ENCODE measurements at regions of chr10 and their contacts with region 1.

Region 1: DNA sequence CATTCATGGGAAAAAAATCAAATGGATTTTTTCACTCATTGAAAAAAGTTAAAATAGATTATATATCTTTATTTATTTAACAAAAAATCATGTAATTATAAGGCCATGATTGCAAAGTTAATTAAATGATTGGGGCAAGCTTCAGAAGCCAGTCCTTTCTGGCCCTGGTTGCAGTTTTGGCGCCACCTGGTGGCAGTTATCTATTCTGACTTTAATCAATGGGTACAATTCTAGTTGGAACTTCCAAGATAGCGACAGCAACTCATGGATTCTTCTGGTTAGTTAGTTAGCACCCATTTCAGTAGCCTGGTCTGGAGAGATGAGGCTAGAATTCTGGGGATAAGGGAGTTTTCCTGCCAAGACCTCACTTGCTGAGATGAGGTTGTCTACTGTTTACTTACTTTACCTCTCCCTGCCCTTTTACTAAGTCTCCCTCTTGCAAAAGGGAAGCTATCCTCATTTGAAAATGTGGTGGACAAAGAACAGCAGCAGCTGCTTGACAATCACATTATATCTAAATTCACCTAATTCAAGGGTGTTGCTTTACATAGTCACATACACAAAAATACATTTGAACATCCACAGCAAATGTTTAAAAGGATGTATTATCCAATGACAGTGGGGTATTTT is 42.3 kb downstream of the NOC3L start:
- DNase-seq: peak; percentile 68
- H3K4me3 Mint-ChIP-seq: no peak overlapping the region
- H3K27ac Mint-ChIP-seq: no peak overlapping the region
- H3K4me1 Mint-ChIP-seq: peaks cover 4% of the 10 kb centered on the region
- H3K27me3 Mint-ChIP-seq: no peaks in the 10 kb centered on the region

Region 2: DNA sequence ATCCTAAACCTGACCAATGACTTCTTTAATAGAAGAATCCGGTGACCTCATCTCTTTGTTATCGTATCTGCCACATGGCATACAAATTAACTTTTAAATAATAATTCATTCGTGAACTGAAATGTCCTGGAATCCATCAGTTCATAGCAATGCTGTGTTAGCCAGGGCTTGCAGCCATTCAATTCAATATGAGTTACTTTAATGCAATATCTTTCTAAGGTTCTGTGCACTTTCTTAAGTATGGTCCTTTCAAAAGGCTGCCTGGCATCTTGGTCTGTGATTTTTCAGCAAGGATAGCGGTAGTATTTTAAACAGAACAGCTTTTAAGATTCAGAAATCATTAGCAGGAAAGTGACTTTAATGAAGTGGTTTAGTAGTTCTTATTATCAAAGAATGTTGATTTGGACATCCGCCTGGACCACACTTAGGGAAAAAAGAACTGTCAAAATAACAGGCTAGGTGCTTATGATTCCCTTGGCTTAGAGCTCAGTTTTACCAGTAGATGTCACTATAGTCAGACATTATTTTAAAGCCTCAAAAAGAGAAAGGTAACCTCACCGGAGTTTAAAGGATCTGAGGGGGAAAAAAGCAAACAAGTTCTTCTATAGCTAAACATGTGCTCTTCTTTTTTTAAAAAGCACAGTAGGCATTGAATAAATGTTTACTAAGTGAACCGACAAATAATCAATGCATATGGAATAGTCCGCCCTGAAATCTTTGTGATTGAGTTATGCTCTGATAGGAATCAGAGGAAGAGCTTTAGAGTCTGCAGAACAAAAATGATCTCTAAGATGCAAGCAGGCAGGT is 403.9 kb before region 1 on chr10:
- CTCF ChIA-PET with region 1: interaction called, 16 read pairs
- POLR2A ChIA-PET with region 1: no interaction called
- DNase-seq: no peak
- H3K4me3 Mint-ChIP-seq: no peak overlapping the region
- H3K27ac Mint-ChIP-seq: no peak overlapping the region
- H3K4me1 Mint-ChIP-seq: no peaks in the 10 kb centered on the region
- H3K27me3 Mint-ChIP-seq: no peaks in the 10 kb centered on the region

Region 3: GRCh38 chr10:94287336-94287735 is 33.1 kb before region 1 on chr10:
- CTCF ChIA-PET with region 1: interaction called, 29 read pairs
- POLR2A ChIA-PET with region 1: no interaction called
- DNase-seq: no peak
- H3K4me3 Mint-ChIP-seq: no peak overlapping the region
- H3K27ac Mint-ChIP-seq: no peak overlapping the region
- H3K4me1 Mint-ChIP-seq: peaks cover 26% of the 10 kb centered on the region
- H3K27me3 Mint-ChIP-seq: peaks cover 38% of the 10 kb centered on the region

Region 4: DNA sequence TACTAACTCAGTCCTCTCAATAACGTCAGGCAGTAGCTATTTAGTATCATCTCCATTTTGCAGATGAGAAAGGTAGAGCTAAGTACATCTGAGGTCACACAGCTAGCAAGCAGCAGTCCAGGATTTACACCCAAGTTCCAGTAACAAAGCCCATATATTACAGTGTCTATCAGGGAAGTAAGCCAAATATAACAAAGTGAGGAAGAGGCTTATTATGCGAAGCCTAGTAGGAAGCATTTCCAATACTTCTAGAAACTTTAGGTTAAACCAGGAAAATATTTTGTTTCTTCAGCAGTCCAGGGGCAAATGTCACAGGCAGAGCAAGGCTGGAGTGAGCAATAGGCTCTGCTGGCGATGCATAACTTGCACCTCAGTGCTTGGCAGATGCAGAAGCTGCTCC is 11.5 kb before region 1 on chr10:
- CTCF ChIA-PET with region 1: interaction called, 17 read pairs
- POLR2A ChIA-PET with region 1: no interaction called
- DNase-seq: no peak
- H3K4me3 Mint-ChIP-seq: no peak overlapping the region
- H3K27ac Mint-ChIP-seq: no peak overlapping the region
- H3K4me1 Mint-ChIP-seq: peaks cover 3% of the 10 kb centered on the region
- H3K27me3 Mint-ChIP-seq: peaks cover 31% of the 10 kb centered on the region

Region 5: GRCh38 chr10:94439275-94439861 is 119.0 kb after region 1 on chr10:
- CTCF ChIA-PET with region 1: interaction called, 22 read pairs
- POLR2A ChIA-PET with region 1: no interaction called
- DNase-seq: no peak
- H3K4me3 Mint-ChIP-seq: no peak overlapping the region
- H3K27ac Mint-ChIP-seq: no peak overlapping the region
- H3K4me1 Mint-ChIP-seq: no peaks in the 10 kb centered on the region
- H3K27me3 Mint-ChIP-seq: peaks cover 24% of the 10 kb centered on the region

Measured in activated CD4-positive, alpha-beta memory T cell treated with anti-CD3 and anti-CD28 coated beads, Interleukin-2, amount 10 ng/mL, durations not matched to agents 7 days and 5 days (primary cell).